ENCODE measurements at regions of chr5 and their contacts with region 1.

Region 1: GRCh38 chr5:137575847-137576246 is 76.7 kb upstream of the SPOCK1 start:
- DNase-seq: no peak

Region 2: DNA sequence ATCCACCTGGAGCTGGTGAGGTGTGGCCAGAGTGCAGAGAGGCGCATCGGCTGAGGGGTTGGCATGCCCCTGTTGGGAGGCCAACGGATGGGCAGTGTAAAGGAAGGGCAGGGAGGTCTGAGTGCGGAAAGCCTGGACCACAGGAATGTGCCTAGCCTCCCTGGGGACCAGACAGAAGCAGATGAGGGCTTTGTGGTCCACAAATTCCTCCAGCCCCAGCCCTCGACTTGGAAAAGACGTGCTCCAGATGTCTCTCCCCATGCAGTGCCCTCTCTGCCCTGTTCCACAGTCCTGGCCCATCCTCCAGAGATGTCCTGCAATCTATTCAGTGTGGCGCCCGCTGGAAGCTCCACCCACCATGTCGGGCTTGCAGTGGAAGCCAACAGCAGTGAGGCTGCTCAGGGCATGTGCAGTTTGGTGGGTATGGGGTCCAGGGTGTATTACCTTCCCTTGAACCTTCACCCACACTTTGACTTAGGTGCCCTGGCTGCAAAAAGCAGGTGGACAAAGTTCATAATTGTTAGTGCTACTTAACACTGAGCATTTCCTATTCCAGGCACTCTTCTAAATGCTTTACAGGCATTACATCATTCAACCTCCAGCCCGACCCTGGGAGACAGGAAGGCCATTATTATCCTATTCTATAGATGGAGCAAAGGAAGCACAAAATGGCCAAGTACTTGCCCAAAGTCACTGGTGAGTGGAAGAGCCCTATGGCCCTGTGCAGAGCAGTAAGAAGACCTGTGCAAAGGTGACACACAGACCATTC is 1861.5 kb before region 1 on chr5:
- intact Hi-C with region 1: no loop called
- DNase-seq: no peak

Region 3: DNA sequence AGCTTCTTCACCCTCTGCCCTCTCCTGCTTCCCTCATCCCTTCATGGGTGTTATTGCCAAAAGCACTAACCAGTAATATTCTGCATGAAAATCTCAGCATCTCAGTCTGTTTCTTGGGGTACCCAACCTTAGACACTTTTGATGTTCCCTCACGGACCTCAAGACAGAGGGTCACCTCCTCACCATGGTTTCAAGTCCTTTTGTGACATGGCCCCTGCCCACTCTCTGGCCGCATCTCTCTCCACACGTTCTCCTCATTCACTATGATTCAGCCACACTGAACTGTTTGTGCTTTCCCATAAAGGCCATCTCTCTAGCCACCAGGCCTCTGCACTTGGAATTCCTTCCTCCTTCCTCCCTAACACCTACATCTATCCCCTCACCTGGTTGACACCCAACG is 34.8 kb after region 1 on chr5:
- intact Hi-C with region 1: loop called in 1 of 2 experiments (anchors 1 kb)
- DNase-seq: no peak

Region 4: GRCh38 chr5:138054847-138055558 is 479.2 kb after region 1 on chr5:
- intact Hi-C with region 1: no loop called
- DNase-seq: no peak